Heart left ventricle (tissue), 16 donors: ENCODE measurements at regions of chr2 and their contacts with region 1.

Region 1: DNA sequence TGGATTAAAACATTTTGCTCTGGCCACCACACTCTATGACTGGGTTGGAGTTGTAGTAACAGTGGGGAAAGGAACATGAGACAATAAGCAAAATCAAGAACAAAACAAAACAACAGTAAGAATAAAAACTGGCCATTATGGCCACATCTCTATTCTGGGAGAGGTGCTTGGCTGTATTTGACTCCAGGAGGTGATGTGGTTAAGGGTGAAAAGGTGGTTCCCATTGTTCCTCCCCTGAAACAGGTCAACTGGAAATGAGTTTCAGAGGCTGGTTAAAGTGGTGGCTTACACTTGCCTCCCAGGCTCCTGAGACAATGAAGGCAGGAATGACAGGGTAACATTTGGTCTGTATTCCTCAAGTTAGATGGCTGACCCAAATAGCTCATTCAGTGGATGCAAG is 67.3 kb upstream of the FANCL start:
- DNase-seq: no peak
- ATAC-seq: no peak
- H3K4me3 ChIP-seq: no peak overlapping the region
- H3K27ac ChIP-seq: no peak overlapping the region
- H3K4me1 ChIP-seq: no peaks in the 10 kb centered on the region
- H3K27me3 ChIP-seq: peaks cover 0 to 3% (median 0%) of the 10 kb centered on the region in 9 donors
- CTCF ChIP-seq: no peak
- POLR2A ChIP-seq: no peak

Region 2: GRCh38 chr2:58334414-58334813 is 26.0 kb after region 1 on chr2:
- intact Hi-C with region 1: loop called in 1 of 10 experiments (anchors 2 kb)
- DNase-seq: no peak
- ATAC-seq: no peak
- H3K4me3 ChIP-seq: no peak overlapping the region
- H3K27ac ChIP-seq: no peak overlapping the region
- H3K4me1 ChIP-seq: no peaks in the 10 kb centered on the region
- H3K27me3 ChIP-seq: no peaks in the 10 kb centered on the region
- CTCF ChIP-seq: no peak
- POLR2A ChIP-seq: no peak

Region 3: DNA sequence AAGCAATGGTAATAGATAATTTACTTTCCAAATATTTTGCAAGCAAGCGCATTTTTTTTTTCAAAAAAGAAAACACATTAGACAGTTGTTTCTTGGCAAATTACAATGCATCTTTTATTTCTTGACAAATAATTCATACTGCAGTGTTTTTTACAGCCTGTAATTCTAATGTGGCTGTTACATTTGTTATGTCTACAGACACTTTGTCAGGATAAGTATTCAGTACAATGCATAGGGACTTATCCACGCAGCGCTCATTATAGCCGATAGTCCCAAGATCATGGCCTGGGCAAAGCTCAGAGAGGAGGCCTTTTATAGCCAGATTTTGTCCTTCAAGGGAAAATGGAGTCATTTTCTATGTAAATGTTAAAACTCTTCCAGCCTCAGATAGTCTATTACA is 55.7 kb after region 1 on chr2:
- intact Hi-C with region 1: no loop called
- DNase-seq: no peak
- ATAC-seq: no peak
- H3K4me3 ChIP-seq: no peak overlapping the region
- H3K27ac ChIP-seq: no peak overlapping the region
- H3K4me1 ChIP-seq: no peaks in the 10 kb centered on the region
- H3K27me3 ChIP-seq: no peaks in the 10 kb centered on the region
- CTCF ChIP-seq: no peak
- POLR2A ChIP-seq: no peak

Region 4: GRCh38 chr2:58479535-58480140 is 171.2 kb after region 1 on chr2:
- intact Hi-C with region 1: no loop called
- DNase-seq: no peak
- ATAC-seq: no peak
- H3K4me3 ChIP-seq: no peak overlapping the region
- H3K27ac ChIP-seq: no peak overlapping the region
- H3K4me1 ChIP-seq: no peaks in the 10 kb centered on the region
- H3K27me3 ChIP-seq: no peaks in the 10 kb centered on the region
- CTCF ChIP-seq: no peak
- POLR2A ChIP-seq: no peak